Activated CD8-positive, alpha-beta T cell treated with anti-CD3 and anti-CD28 coated beads for 36 hours (primary cell): ENCODE measurements at regions of chr3 and their contacts with region 1.

Region 1: DNA sequence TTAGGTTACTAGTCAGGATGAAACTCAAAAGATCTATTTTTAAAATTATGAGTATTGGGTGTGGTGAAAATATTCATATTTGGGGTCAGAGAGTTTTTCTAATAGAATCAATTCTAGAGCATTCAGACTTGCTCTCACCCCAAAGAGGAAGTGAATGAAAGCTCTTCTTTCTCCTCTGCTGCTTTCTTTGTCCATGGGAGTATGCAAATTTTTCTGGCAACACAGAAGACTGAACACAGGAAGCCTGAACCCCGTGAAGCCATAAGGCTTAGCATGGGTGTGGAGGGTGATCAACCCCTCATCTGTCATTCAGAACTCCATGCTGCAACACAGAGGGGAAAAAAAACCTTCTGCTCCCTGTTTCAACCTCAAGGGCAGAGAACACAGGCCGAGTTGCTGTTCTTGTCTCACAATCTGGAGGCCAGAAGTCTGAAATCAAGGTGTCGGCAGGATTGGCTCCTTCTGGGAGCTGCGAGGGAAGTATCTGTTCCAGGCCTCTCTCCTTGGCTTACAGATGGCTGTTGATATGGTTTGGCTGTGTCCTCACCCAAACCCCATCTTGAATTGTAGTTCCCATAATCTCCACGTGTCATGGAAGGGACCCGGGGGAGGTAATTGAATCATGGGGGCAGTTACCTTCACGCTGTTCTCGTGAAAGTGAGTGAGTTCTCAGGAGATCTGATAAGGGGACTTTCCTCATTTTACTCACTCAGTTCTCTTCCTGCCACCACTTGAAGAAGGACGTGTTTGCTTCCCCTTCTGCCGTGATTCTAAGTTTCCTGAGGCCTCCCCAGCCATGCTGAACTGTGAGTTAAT is 33.7 kb upstream of the CD47 start:
- DNase-seq: peak; percentile 88
- ATAC-seq: peak; percentile 71
- H3K4me3 Mint-ChIP-seq: peak overlapping the region; percentile 92
- H3K27ac Mint-ChIP-seq: peak overlapping the region; percentile 100
- H3K4me1 Mint-ChIP-seq: peaks cover 60% of the 10 kb centered on the region
- H3K27me3 Mint-ChIP-seq: no peaks in the 10 kb centered on the region
- CTCF ChIP-seq: no peak

Region 2: GRCh38 chr3:107884719-107885460 is 239.7 kb before region 1 on chr3:
- CTCF ChIA-PET with region 1: no interaction called
- POLR2A ChIA-PET with region 1: no interaction called
- intact Hi-C with region 1: no loop called
- DNase-seq: no peak
- ATAC-seq: no peak
- H3K4me3 Mint-ChIP-seq: no peak overlapping the region
- H3K27ac Mint-ChIP-seq: no peak overlapping the region
- H3K4me1 Mint-ChIP-seq: peaks cover 4% of the 10 kb centered on the region
- H3K27me3 Mint-ChIP-seq: no peaks in the 10 kb centered on the region
- CTCF ChIP-seq: no peak

Region 3: GRCh38 chr3:108221911-108222852 is 97.6 kb after region 1 on chr3 and contains the start of gene IFT57:
- CTCF ChIA-PET with region 1: no interaction called
- POLR2A ChIA-PET with region 1: interaction called, 19 read pairs
- intact Hi-C with region 1: loop called (anchors 5 kb)
- DNase-seq: peak; percentile 97
- ATAC-seq: peak; percentile 93
- H3K4me3 Mint-ChIP-seq: peak within 1 kb of the TSS; percentile 99
- H3K27ac Mint-ChIP-seq: peak within 1 kb of the TSS; percentile 99
- H3K4me1 Mint-ChIP-seq: peaks cover 45% of the 10 kb centered on the region
- H3K27me3 Mint-ChIP-seq: no peaks in the 10 kb centered on the region
- CTCF ChIP-seq: no peak
- total RNA-seq, gene IFT57: 30.9 to 35.3 TPM